Transverse colon (tissue), 4 donors: ENCODE measurements at regions of chr7 and their contacts with region 1.

Region 1: DNA sequence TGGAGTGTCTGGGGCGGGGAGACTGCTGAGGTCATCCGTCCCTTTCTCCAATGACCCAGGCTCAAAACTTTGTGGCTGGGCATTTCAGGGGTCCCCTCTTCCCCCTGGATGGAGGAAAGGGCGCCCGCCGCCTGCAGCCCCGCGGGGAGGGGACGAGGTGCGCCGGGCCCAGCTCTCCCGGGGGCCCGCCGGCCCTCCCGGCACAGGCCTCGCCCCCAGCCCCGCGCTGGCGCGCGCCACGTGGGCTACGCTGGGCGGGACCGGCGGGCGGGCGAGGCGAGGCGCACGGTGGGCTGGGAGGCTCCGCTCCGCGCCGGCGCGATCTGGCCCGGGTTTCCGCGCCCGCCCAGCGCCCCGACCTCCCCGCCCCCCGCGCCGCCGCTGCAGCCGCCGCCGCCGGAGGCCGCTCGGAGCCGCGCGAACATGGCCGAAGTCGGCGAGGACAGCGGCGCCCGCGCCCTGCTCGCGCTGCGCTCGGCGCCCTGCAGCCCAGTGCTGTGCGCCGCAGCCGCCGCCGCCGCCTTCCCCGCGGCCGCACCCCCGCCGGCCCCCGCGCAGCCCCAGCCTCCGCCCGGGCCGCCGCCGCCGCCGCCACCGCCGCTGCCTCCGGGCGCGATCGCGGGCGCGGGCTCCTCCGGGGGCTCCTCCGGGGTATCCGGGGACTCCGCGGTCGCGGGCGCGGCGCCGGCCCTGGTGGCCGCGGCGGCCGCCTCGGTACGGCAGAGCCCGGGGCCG is at the start of gene FOXK1:
- DNase-seq: peak; percentile 81
- H3K4me3 ChIP-seq: peak within 1 kb of the TSS; percentile 82 to 98 (median 95)
- H3K27ac ChIP-seq: peak within 1 kb of the TSS; percentile 88 to 98 (median 96)
- H3K4me1 ChIP-seq: peaks cover 11 to 33% (median 20%) of the 10 kb centered on the region in 4 donors
- H3K27me3 ChIP-seq: no peaks in the 10 kb centered on the region
- CTCF ChIP-seq: no peak
- EP300 ChIP-seq: no peak
- POLR2A ChIP-seq: peak; percentile 45
- total RNA-seq, gene FOXK1: 28.0 to 59.9 (median 34.2) TPM

Region 2: GRCh38 chr7:4216016-4216415 is 466.0 kb before region 1 on chr7:
- in situ Hi-C with region 1: no loop called
- intact Hi-C with region 1: no loop called
- DNase-seq: no peak
- H3K4me3 ChIP-seq: no peak overlapping the region
- H3K27ac ChIP-seq: no peak overlapping the region
- H3K4me1 ChIP-seq: no peaks in the 10 kb centered on the region
- H3K27me3 ChIP-seq: no peaks in the 10 kb centered on the region
- CTCF ChIP-seq: no peak
- EP300 ChIP-seq: no peak
- POLR2A ChIP-seq: no peak

Region 3: DNA sequence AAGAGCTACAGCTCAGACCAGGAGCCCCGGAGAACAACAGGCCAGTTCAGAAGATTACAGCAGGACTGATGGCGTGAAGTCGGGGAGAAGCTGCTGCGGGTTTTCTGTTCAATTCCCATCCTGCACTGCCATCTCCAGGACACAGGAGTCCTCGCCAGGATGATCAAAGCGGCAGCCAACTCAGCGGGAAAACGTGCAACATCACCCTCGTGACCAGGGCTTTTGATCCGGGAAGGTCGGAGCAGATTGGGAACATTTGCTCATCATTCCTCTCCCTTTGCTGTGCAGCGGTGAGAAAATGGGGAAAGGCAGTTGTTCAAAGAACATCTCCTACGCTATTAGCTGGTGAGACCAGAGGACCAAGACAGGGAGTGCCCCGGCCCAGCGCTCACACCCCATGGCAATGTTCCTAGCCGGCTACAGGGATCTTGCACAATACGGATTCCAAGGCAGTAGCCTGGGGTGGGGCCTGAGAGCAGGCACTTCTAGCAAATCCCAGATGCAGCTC is 50.3 kb before region 1 on chr7:
- in situ Hi-C with region 1: loop called in 1 of 4 experiments (anchors 10 kb)
- intact Hi-C with region 1: no loop called
- DNase-seq: peak; percentile 85
- H3K4me3 ChIP-seq: peak overlapping the region in 2 of 4 donors; percentile 13 to 32
- H3K27ac ChIP-seq: peak overlapping the region; percentile 20 to 63 (median 46)
- H3K4me1 ChIP-seq: peaks cover 0 to 12% (median 7%) of the 10 kb centered on the region in 4 donors
- H3K27me3 ChIP-seq: no peaks in the 10 kb centered on the region
- CTCF ChIP-seq: peak; percentile 59 to 74 (median 63)
- EP300 ChIP-seq: no peak
- POLR2A ChIP-seq: no peak

Region 4: GRCh38 chr7:4641667-4642467 is 40.2 kb before region 1 on chr7:
- in situ Hi-C with region 1: loop called in 1 of 4 experiments (anchors 10 kb)
- intact Hi-C with region 1: loop called (anchors 2 kb)
- DNase-seq: peak; percentile 97
- H3K4me3 ChIP-seq: peak overlapping the region; percentile 44 to 77 (median 58)
- H3K27ac ChIP-seq: peak overlapping the region; percentile 87 to 93 (median 90)
- H3K4me1 ChIP-seq: peaks cover 0 to 12% (median 6%) of the 10 kb centered on the region in 4 donors
- H3K27me3 ChIP-seq: no peaks in the 10 kb centered on the region
- CTCF ChIP-seq: peak in 2 of 5 experiments; percentile 22 to 49
- EP300 ChIP-seq: no peak
- POLR2A ChIP-seq: peak; percentile 81

Region 5: DNA sequence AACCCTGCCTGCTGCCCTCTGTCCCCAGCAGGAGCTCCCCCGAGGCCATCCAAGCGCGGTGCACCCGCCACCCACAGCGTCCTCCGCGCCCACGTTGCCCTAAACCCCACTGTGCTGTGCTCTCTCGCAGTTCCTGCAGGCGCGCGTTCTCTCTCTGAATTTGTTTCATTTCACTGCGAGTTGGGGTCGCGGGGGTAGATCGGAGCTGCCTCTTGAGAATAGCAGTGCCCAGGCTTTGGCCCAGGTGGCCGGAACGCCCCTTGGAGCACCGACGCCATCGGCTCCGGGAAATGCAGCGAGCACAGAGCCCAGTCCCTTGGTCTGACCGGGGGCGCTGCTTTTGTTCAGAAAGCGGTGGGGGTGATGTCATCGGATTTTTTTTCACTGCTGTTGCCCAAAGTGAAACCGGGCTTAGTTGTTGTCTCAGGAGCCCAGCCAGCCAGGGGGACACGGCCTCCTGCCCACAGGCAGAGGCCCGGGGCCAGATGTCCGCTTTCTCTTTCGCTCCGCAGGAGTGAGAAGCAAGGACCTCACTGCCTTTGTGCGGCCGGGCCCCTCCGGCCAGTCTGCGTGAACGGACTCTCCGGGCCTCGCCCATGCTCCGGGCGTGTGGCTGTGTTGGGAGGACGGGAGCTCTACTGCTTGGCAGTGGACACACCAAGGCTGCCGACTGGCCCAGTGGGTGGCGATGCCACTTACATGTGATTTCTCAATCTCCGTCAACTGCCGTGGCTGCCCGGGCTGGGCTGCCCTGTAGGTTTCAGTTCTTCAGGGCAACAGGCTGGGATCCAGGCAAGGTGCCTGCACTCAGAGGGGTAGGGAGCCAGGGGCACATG is 43.2 kb after region 1 on chr7:
- in situ Hi-C with region 1: no loop called
- intact Hi-C with region 1: loop called (anchors 2 kb)
- DNase-seq: peak; percentile 70
- H3K4me3 ChIP-seq: peak overlapping the region; percentile 2 to 49 (median 34)
- H3K27ac ChIP-seq: peak overlapping the region; percentile 87 to 90 (median 88)
- H3K4me1 ChIP-seq: peaks cover 8 to 32% (median 12%) of the 10 kb centered on the region in 4 donors
- H3K27me3 ChIP-seq: no peaks in the 10 kb centered on the region
- CTCF ChIP-seq: no peak
- EP300 ChIP-seq: no peak
- POLR2A ChIP-seq: peak; percentile 29

Region 6: GRCh38 chr7:4744391-4745264 is 62.6 kb after region 1 on chr7:
- in situ Hi-C with region 1: loop called in 1 of 4 experiments (anchors 10 kb)
- intact Hi-C with region 1: loop called (anchors 5 kb)
- DNase-seq: peak; percentile 98
- H3K4me3 ChIP-seq: peak overlapping the region in 3 of 4 donors; percentile 13 to 43 (median 21)
- H3K27ac ChIP-seq: peak overlapping the region; percentile 96 to 99 (median 98)
- H3K4me1 ChIP-seq: peaks cover 30 to 80% (median 59%) of the 10 kb centered on the region in 4 donors
- H3K27me3 ChIP-seq: no peaks in the 10 kb centered on the region
- CTCF ChIP-seq: no peak
- EP300 ChIP-seq: peak; percentile 81
- POLR2A ChIP-seq: peak; percentile 21

Region 7: GRCh38 chr7:4759211-4759610 is 77.2 kb after region 1 on chr7:
- in situ Hi-C with region 1: no loop called
- intact Hi-C with region 1: no loop called
- DNase-seq: no peak
- H3K4me3 ChIP-seq: no peak overlapping the region
- H3K27ac ChIP-seq: no peak overlapping the region
- H3K4me1 ChIP-seq: no peaks in the 10 kb centered on the region
- H3K27me3 ChIP-seq: no peaks in the 10 kb centered on the region
- CTCF ChIP-seq: no peak
- EP300 ChIP-seq: no peak
- POLR2A ChIP-seq: no peak

Region 8: DNA sequence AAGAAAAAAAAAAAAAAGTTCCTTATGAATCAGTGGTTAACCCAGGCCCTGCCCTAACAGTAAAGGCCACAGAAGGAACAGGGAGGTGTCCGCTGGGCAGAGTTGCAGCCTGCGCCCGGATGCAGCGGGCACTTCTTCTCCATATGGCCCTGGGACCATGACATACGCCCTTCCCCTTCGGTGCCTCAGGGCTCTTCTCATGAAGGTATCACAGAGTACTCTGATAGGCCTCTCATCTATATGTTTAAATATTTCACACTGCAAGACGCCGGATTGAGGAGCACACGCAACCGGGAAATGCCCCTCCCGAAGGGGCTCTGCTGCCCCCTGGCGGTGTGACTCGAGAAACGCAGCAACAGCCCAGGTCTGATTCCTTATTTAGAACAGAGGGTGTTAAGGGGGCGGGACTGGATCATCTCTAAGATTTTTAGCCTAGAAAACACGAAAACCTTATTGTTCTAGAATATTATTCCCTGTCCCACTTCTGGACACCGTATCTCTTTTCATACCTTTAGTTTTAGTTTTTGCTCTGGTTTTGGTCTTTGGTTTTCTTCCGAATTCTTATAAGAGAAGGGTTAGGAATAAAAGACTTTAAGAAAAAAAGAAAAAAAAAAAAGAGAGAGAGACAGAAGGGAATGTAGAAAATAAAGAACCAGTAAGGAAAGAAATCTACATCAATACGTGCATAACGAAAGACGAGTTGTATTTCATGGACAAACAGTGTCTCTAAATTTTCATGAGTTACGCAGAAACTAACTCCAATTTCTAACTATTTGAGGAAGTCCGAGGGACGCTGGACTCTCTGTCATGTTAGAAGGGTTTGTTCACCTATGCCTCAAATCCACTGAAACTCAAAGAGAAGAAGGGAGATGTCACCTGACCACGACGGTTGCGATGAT is 1753.7 kb after region 1 on chr7:
- in situ Hi-C with region 1: no loop called
- intact Hi-C with region 1: no loop called
- DNase-seq: peak; percentile 84
- H3K4me3 ChIP-seq: peak overlapping the region in 1 of 4 donors; percentile 5
- H3K27ac ChIP-seq: peak overlapping the region; percentile 47 to 80 (median 66)
- H3K4me1 ChIP-seq: peaks cover 0 to 38% (median 4%) of the 10 kb centered on the region in 4 donors
- H3K27me3 ChIP-seq: no peaks in the 10 kb centered on the region
- CTCF ChIP-seq: peak; percentile 94 to 98 (median 95)
- EP300 ChIP-seq: no peak
- POLR2A ChIP-seq: no peak